ENCODE measurements at regions of chr15 and their contacts with region 1.

Region 1: GRCh38 chr15:52261498-52262242 is 33.9 kb downstream of the MYO5C start:
- DNase-seq: peak; percentile 40 to 79
- ATAC-seq: peak; percentile 84 to 96 (median 94)
- H3K4me3 ChIP-seq: no peak overlapping the region
- H3K27ac ChIP-seq: peak overlapping the region in 9 of 10 donors; percentile 37 to 79 (median 59)
- H3K4me1 ChIP-seq: peaks cover 0 to 35% (median 30%) of the 10 kb centered on the region in 9 donors
- H3K27me3 ChIP-seq: no peaks in the 10 kb centered on the region
- CTCF ChIP-seq: peak in 4 of 9 donors; percentile 24 to 32 (median 28)

Region 2: GRCh38 chr15:52295421-52296001 is 33.8 kb after region 1 on chr15 and contains the start of gene MYO5C:
- intact Hi-C with region 1: loop called in 1 of 10 experiments (anchors 5 kb)
- DNase-seq: peak; percentile 78 to 80
- ATAC-seq: peak; percentile 93 to 99 (median 94)
- H3K4me3 ChIP-seq: peak within 1 kb of the TSS; percentile 58 to 80 (median 68)
- H3K27ac ChIP-seq: peak within 1 kb of the TSS in 8 of 10 donors; percentile 18 to 74 (median 64)
- H3K4me1 ChIP-seq: peaks cover 7 to 20% (median 12%) of the 10 kb centered on the region in 9 donors
- H3K27me3 ChIP-seq: peaks cover 0 to 33% (median 0%) of the 10 kb centered on the region in 7 donors
- CTCF ChIP-seq: no peak
- total RNA-seq, gene MYO5C: 0.85 to 3.5 (median 2.3) TPM

Region 3: GRCh38 chr15:52584414-52584813 is 322.7 kb after region 1 on chr15:
- intact Hi-C with region 1: loop called in 1 of 10 experiments (anchors 10 kb)
- DNase-seq: no peak
- ATAC-seq: no peak
- H3K4me3 ChIP-seq: no peak overlapping the region
- H3K27ac ChIP-seq: no peak overlapping the region
- H3K4me1 ChIP-seq: peaks cover 0 to 9% (median 0%) of the 10 kb centered on the region in 9 donors
- H3K27me3 ChIP-seq: no peaks in the 10 kb centered on the region
- CTCF ChIP-seq: no peak

Measured in heart right ventricle (tissue), 16 donors.